ENCODE measurements at regions of chr12 and their contacts with region 1.

Region 1: DNA sequence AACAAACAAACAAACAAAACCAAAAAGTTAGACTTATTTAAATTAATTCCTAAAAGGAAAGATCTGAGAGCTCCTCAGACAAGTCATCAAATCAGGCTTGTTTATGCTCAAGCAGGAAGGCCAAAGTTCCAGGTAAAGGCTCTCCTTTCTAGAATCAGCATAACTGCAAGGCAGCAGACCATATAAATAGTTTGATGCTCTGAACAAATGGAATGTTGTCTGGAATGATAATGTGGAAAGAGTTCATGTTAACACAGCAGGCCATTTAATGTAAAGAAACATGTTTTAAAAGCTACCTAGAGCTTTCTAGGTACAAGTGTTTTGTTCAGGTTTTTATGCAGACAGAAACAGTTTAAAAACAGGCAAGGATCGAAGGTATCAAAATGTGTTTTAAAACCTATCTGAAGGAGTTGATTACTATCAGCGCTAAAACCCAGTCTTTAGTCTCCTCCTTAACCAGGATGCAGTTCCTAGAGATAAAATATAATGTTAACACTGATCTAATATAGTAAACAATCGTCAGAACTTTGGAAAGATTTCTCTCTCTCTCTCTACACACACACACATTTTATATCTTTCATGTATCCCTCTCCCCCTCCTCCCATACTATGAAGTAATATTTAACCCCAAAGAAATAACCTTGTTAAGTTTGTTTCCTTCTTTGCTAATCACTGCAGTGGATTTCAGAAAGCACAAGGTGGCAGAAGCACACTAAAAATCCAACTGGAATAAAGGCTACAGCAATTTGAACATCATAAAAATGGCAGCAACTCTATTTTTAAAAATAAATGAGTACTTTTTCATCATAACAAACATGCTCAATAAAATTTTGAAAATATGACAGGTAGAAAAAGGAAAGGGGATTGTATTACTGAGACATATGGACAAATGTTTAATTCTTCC is 135.5 kb downstream of the PAWR start:
- DNase-seq: no peak
- H3K4me3 ChIP-seq: no peak overlapping the region
- H3K27ac ChIP-seq: peak overlapping the region in 1 of 59 donors; percentile 33
- H3K27me3 ChIP-seq: no peaks in the 10 kb centered on the region
- CTCF ChIP-seq: peak; percentile 40 to 74 (median 57)

Region 2: DNA sequence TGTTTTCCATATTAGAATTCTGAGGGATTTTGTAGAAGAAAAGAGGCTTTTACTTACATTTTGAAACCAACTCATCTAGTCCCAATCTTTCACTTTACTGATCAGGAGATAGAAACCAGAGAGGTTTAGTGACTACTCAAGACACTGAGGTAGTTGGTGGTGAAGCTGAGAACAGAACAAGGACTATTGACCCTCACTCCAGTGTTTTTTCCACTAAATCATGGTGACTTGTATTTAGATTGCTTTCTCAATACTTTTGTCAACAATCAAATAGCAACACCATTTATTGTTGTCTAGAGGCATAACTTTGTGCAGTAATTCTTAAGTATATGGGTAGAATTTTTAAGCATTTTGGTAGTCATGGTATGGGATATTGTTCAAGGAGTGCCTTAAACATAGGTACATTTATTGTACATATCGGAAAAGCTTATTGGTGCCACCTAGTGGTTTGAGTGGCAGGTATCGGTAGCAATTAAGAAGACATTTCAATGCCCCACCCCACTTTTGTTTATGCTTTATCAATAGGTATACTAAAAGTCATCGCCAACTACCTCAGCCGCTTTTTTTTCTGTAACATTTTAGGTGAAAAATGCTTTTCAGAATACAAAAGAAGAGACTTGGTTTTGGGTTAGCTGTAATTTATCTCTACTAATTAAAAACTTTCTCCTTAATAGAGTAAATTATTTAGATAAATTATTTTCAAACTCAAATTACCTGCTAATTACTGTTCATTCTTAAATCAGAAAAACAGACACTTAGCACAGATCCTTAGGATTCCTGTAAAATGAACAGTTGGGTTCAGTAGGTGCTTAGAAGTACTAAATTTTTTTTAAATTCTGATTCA is 182.8 kb after region 1 on chr12:
- intact Hi-C with region 1: loop called in 1 of 2 experiments (anchors 10 kb)
- DNase-seq: peak in 1 of 10 donors; percentile 5
- H3K4me3 ChIP-seq: no peak overlapping the region
- H3K27ac ChIP-seq: no peak overlapping the region
- H3K27me3 ChIP-seq: no peaks in the 10 kb centered on the region
- CTCF ChIP-seq: peak; percentile 29 to 80 (median 58)

Region 3: DNA sequence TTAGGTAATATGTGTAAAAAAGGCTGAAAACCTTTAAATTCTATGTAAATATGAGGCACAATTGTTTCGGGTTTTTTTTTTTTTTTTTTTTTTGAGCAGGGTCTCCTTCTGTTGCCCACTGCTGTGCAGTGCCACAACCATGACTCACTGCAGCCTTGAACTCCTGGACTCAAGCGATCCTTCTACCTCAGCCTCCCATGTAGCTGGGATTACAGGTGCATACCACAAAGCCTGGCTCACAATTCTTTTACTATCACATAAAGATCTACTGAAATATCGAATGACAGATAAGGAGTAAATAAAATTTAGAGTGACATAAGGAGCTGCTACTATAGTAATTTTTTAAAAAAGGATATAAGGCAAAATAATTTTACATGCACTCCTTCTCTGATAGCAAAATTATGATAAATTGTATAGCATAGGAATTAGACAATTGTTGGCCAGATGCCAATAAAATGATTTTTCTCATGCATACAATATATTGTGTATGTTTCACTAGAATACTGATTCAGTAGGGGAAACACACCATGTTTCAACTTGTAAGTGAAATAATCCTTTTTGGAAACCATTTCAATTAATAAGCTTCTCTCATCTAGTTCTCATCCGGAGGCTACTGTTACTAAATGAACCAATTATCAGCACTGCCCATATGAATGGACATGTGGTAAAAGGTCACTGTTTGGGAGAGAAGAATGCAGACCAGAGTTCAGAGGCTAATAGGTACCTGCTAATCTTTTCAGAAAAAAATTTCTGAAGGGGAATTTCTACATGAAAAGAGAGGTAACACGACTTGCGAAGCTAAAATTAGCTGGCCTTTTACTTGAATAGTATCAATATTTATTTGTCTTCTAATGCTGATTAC is 271.2 kb after region 1 on chr12:
- intact Hi-C with region 1: no loop called
- DNase-seq: no peak
- H3K4me3 ChIP-seq: no peak overlapping the region
- H3K27ac ChIP-seq: no peak overlapping the region
- H3K27me3 ChIP-seq: no peaks in the 10 kb centered on the region
- CTCF ChIP-seq: no peak

Region 4: GRCh38 chr12:80186727-80187217 is 631.5 kb after region 1 on chr12:
- intact Hi-C with region 1: loop called (anchors 5 to 10 kb)
- DNase-seq: peak in 2 of 10 donors; percentile 6 to 66
- H3K4me3 ChIP-seq: peak overlapping the region in 18 of 59 donors; percentile 3 to 44 (median 28)
- H3K27ac ChIP-seq: peak overlapping the region in 55 of 59 donors; percentile 18 to 91 (median 74)
- H3K27me3 ChIP-seq: no peaks in the 10 kb centered on the region
- CTCF ChIP-seq: peak; percentile 51 to 83 (median 73)